SK-N-SH (cell line): ENCODE measurements at regions of chr16 and their contacts with region 1.

Region 1: DNA sequence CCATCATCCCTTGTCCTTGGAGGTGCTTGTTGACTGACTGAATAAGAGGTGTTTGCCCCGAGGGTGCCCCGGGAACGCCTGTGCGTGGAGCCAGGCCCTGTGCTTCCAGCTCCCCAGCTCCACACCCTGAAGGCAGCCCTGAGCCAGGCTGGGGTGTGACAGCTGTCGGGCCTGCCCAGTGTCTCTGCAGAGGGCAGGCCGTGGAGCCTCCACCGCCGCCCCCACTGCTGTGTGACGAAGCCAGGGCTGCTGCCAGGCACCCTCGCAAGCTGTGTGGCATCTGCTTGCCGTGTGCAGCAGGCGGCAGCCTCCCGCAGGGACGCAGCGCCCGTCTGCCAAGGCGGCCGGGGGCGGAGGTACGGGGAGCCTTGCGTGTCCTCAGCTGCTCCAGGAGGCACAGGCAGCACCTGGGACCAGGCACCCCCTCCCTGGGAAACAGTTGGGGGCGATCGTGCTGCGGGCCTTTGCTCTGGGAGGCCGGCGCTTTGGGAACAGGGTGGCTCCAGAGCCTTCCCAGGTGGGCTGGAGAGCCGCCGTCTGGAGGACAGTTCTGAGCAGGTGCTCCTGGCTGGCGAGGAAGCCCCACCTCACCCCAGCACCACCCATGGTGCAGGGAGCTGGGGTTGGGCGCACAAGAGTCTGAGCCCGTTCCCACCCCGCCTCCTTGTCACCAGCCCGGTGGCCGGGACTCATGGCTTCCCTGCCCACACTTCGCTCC is 26.6 kb downstream of the GSE1 start:
- DNase-seq: peak; percentile 92
- H3K4me3 ChIP-seq: no peak overlapping the region
- H3K27ac ChIP-seq: peak overlapping the region in 1 of 2 experiments; percentile 54; a peak in 2 of 4 replicates
- H3K4me1 ChIP-seq: peaks cover 0 to 74% of the 10 kb centered on the region in 2 experiments; a peak in 1 of 4 replicates
- H3K27me3 ChIP-seq: no peaks in the 10 kb centered on the region
- CTCF ChIP-seq: no peak
- EP300 ChIP-seq: peak in 1 of 2 experiments; percentile 53; a peak in 1 of 4 replicates
- RAD21 ChIP-seq: peak; percentile 31

Region 2: GRCh38 chr16:85601730-85602401 is 37.8 kb before region 1 on chr16:
- CTCF ChIA-PET with region 1: no interaction called
- POLR2A ChIA-PET with region 1: no interaction called
- DNase-seq: no peak
- H3K4me3 ChIP-seq: no peak overlapping the region
- H3K27ac ChIP-seq: peak overlapping the region in 1 of 2 experiments; percentile 63; a peak in 2 of 4 replicates
- H3K4me1 ChIP-seq: peaks cover 0 to 65% of the 10 kb centered on the region in 2 experiments; a peak in 1 of 4 replicates
- H3K27me3 ChIP-seq: no peaks in the 10 kb centered on the region
- CTCF ChIP-seq: no peak
- EP300 ChIP-seq: no peak
- RAD21 ChIP-seq: no peak

Region 3: GRCh38 chr16:85626191-85626981 is 13.3 kb before region 1 on chr16:
- CTCF ChIA-PET with region 1: interaction called, 21 read pairs
- POLR2A ChIA-PET with region 1: interaction called, 3 read pairs
- DNase-seq: peak; percentile 89
- H3K4me3 ChIP-seq: no peak overlapping the region
- H3K27ac ChIP-seq: peak overlapping the region; percentile 13 to 97; a peak in 2 of 4 replicates
- H3K4me1 ChIP-seq: peaks cover 6 to 81% of the 10 kb centered on the region in 2 experiments; a peak in 3 of 4 replicates
- H3K27me3 ChIP-seq: no peaks in the 10 kb centered on the region
- CTCF ChIP-seq: no peak
- EP300 ChIP-seq: peak in 1 of 2 experiments; percentile 59; a peak in 2 of 4 replicates
- RAD21 ChIP-seq: no peak

Region 4: GRCh38 chr16:85675251-85675927 is 35.7 kb after region 1 on chr16:
- CTCF ChIA-PET with region 1: interaction called, 10 read pairs
- POLR2A ChIA-PET with region 1: no interaction called
- DNase-seq: no peak
- H3K4me3 ChIP-seq: no peak overlapping the region
- H3K27ac ChIP-seq: peak overlapping the region in 1 of 2 experiments; percentile 96; a peak in 2 of 4 replicates
- H3K4me1 ChIP-seq: peaks cover 9 to 47% of the 10 kb centered on the region in 2 experiments; a peak in 2 of 4 replicates
- H3K27me3 ChIP-seq: no peaks in the 10 kb centered on the region
- CTCF ChIP-seq: peak; percentile 57
- EP300 ChIP-seq: no peak
- RAD21 ChIP-seq: peak; percentile 49